Psoas muscle (tissue), 8 donors: ENCODE measurements at regions of chr16 and their contacts with region 1.

Region 1: DNA sequence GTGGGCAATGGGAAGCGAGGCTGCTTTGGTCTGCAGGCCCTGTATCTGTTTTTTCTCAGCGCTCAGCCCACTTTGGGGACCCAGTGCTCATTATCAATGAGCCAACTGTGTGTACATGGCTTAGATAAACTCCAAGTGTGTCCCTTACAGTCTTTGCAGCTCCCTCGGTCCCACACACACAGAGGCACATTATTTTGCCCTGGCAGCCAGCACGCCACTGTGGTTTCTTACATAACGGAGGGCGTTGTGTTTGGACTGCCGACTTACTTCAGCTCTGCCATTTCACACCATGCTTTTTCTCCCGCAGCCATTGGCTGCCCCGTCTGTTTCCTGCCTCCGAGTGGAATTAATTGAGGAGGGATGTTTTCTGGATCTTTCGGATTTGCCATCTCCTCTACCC is 56.5 kb upstream of the CLEC18A start:
- DNase-seq: no peak
- ATAC-seq: no peak
- H3K4me3 ChIP-seq: no peak overlapping the region
- H3K27ac ChIP-seq: no peak overlapping the region
- H3K4me1 ChIP-seq: peaks cover 6% of the 10 kb centered on the region
- H3K27me3 ChIP-seq: no peaks in the 10 kb centered on the region
- CTCF ChIP-seq: no peak

Region 2: DNA sequence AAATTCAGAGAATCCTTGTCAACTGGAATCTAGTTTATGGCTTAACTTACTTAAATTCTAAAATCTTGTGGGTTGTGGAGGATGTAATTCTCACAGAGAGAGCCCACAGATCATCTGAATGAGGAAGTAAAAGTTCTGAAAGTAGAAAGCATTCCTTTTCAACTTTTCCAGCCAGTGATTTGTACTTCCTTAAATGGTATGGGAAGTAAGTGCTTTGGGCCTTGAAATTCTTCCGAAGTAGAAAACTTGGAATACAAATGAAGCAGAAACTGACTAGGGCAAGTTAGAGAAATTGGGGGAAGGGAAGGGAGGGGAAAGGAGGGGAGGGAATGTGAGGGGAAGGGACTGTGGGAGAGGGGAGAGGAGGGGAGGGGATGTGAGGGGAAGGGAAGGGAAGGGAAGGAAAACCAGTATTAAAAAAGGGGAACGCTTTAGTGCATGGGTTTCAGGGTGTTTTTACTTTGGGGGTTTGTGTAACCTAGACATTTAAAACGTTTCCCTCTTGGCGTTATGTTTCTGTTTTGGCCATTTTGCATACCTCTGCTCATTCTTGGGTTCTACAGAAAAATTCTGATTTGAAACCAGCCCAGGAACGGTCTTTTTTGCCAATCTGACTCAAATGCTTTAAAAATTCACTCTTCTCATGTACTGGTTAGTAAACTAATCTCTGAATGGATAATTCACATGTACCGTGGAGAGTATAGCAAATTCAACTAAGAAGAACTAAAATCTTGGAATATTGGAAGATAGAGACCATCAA is 723.2 kb before region 1 on chr16:
- intact Hi-C with region 1: no loop called
- DNase-seq: no peak
- ATAC-seq: no peak
- H3K4me3 ChIP-seq: no peak overlapping the region
- H3K27ac ChIP-seq: peak overlapping the region; percentile 61
- H3K4me1 ChIP-seq: peaks cover 4% of the 10 kb centered on the region
- H3K27me3 ChIP-seq: no peaks in the 10 kb centered on the region
- CTCF ChIP-seq: no peak

Region 3: GRCh38 chr16:69914826-69915225 is 20.1 kb after region 1 on chr16:
- intact Hi-C with region 1: loop called in 1 of 2 experiments (anchors 1 kb)
- DNase-seq: no peak
- ATAC-seq: no peak
- H3K4me3 ChIP-seq: no peak overlapping the region
- H3K27ac ChIP-seq: no peak overlapping the region
- H3K4me1 ChIP-seq: no peaks in the 10 kb centered on the region
- H3K27me3 ChIP-seq: no peaks in the 10 kb centered on the region
- CTCF ChIP-seq: no peak

Region 4: GRCh38 chr16:69927056-69927757 is 32.5 kb after region 1 on chr16:
- intact Hi-C with region 1: no loop called
- DNase-seq: peak; percentile 76 to 89
- ATAC-seq: peak; percentile 75 to 84 (median 80)
- H3K4me3 ChIP-seq: peak overlapping the region; percentile 47
- H3K27ac ChIP-seq: peak overlapping the region; percentile 38
- H3K4me1 ChIP-seq: peaks cover 11% of the 10 kb centered on the region
- H3K27me3 ChIP-seq: no peaks in the 10 kb centered on the region
- CTCF ChIP-seq: no peak

Region 5: GRCh38 chr16:69937465-69937951 is 42.8 kb after region 1 on chr16:
- intact Hi-C with region 1: no loop called
- DNase-seq: no peak
- ATAC-seq: no peak
- H3K4me3 ChIP-seq: no peak overlapping the region
- H3K27ac ChIP-seq: no peak overlapping the region
- H3K4me1 ChIP-seq: no peaks in the 10 kb centered on the region
- H3K27me3 ChIP-seq: no peaks in the 10 kb centered on the region
- CTCF ChIP-seq: no peak